ENCODE measurements at regions of chr3 and their contacts with region 1.

Region 1: DNA sequence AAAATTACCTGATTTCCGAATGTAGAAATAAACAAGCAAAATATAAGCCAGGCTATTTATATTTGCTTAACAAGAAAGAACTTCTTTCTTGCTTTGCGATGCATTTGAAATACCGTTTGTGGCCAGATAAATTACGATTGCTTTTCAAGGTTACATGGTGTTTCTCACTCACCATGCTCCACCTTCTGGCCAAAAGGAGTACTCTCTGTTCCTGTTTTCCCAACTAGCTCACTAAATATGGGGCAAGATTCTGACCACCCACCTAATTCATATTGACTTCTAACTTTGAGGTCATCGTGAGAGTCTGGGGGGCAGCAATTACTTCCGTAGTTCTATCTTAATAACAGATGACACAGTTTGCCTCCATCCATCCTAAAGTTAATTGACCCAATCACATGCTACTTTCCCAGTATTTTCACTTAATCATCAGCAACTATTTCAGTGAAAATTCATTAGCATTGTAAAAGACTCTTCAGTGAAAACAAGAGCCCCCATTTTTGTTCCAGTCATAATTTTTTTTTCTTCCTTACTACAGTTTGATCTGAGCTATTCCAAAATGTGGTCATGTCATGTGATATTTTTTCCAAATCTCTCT is 25.9 kb downstream of the ACP3 start:
- DNase-seq: no peak
- H3K4me3 ChIP-seq: peak overlapping the region in 1 of 8 donors; percentile 38
- H3K27ac ChIP-seq: peak overlapping the region in 2 of 8 donors; percentile 33 to 34
- H3K4me1 ChIP-seq: peaks cover 0 to 19% (median 7%) of the 10 kb centered on the region in 6 donors
- H3K27me3 ChIP-seq: no peaks in the 10 kb centered on the region
- CTCF ChIP-seq: peak in 10 of 11 experiments; percentile 36 to 82 (median 74)
- POLR2A ChIP-seq: no peak

Region 2: GRCh38 chr3:132253262-132253878 is 89.7 kb before region 1 on chr3:
- intact Hi-C with region 1: loop called (anchors 5 kb)
- DNase-seq: no peak
- H3K4me3 ChIP-seq: no peak overlapping the region
- H3K27ac ChIP-seq: no peak overlapping the region
- H3K4me1 ChIP-seq: peaks cover 0 to 9% (median 0%) of the 10 kb centered on the region in 6 donors
- H3K27me3 ChIP-seq: no peaks in the 10 kb centered on the region
- CTCF ChIP-seq: peak; percentile 27 to 75 (median 48)
- POLR2A ChIP-seq: no peak

Measured in spleen (tissue), 13 donors.